ENCODE measurements at regions of chr3 and their contacts with region 1.

Region 1: GRCh38 chr3:184523825-184524615 is 37.6 kb upstream of the EPHB3 start:
- DNase-seq: peak; percentile 67
- ATAC-seq: peak; percentile 77
- H3K4me3 ChIP-seq: no peak overlapping the region
- H3K27ac ChIP-seq: no peak overlapping the region
- H3K4me1 ChIP-seq: peaks cover 3% of the 10 kb centered on the region; the same call in 1 of the 2 replicates
- H3K27me3 ChIP-seq: peaks cover 43% of the 10 kb centered on the region
- CTCF ChIP-seq: no peak
- POLR2A ChIP-seq: no peak
- RAD21 ChIP-seq: no peak

Region 2: GRCh38 chr3:184096811-184097383 is 427.1 kb before region 1 on chr3 and contains the start of gene HTR3E:
- CTCF ChIA-PET with region 1: no interaction called
- POLR2A ChIA-PET with region 1: no interaction called
- dilution Hi-C with region 1: no loop called
- in situ Hi-C with region 1: no loop called
- intact Hi-C with region 1: no loop called
- DNase-seq: no peak
- ATAC-seq: no peak
- H3K4me3 ChIP-seq: no peak within 1 kb of the TSS
- H3K27ac ChIP-seq: no peak within 1 kb of the TSS
- H3K4me1 ChIP-seq: peaks cover 1% of the 10 kb centered on the region; the same call in 1 of the 2 replicates
- H3K27me3 ChIP-seq: peaks cover 5% of the 10 kb centered on the region; the same call in 1 of the 2 replicates
- CTCF ChIP-seq: no peak
- POLR2A ChIP-seq: no peak
- RAD21 ChIP-seq: no peak
- total RNA-seq, gene HTR3E: not detected in 2 replicates

Region 3: GRCh38 chr3:184399410-184399809 is 124.6 kb before region 1 on chr3:
- CTCF ChIA-PET with region 1: no interaction called
- POLR2A ChIA-PET with region 1: no interaction called
- dilution Hi-C with region 1: no loop called
- in situ Hi-C with region 1: no loop called
- intact Hi-C with region 1: loop called (anchors 5 kb)
- DNase-seq: peak; percentile 96
- ATAC-seq: peak; percentile 99
- H3K4me3 ChIP-seq: no peak overlapping the region
- H3K27ac ChIP-seq: no peak overlapping the region
- H3K4me1 ChIP-seq: no peaks in the 10 kb centered on the region
- H3K27me3 ChIP-seq: peaks cover 43% of the 10 kb centered on the region
- CTCF ChIP-seq: no peak
- POLR2A ChIP-seq: no peak
- RAD21 ChIP-seq: no peak

Region 4: GRCh38 chr3:184479426-184480126 is 44.4 kb before region 1 on chr3:
- CTCF ChIA-PET with region 1: no interaction called
- POLR2A ChIA-PET with region 1: no interaction called
- dilution Hi-C with region 1: no loop called
- in situ Hi-C with region 1: no loop called
- intact Hi-C with region 1: loop called (anchors 5 kb)
- DNase-seq: no peak
- ATAC-seq: no peak
- H3K4me3 ChIP-seq: no peak overlapping the region
- H3K27ac ChIP-seq: no peak overlapping the region
- H3K4me1 ChIP-seq: no peaks in the 10 kb centered on the region
- H3K27me3 ChIP-seq: peaks cover 27% of the 10 kb centered on the region
- CTCF ChIP-seq: no peak
- POLR2A ChIP-seq: no peak
- RAD21 ChIP-seq: no peak

Region 5: DNA sequence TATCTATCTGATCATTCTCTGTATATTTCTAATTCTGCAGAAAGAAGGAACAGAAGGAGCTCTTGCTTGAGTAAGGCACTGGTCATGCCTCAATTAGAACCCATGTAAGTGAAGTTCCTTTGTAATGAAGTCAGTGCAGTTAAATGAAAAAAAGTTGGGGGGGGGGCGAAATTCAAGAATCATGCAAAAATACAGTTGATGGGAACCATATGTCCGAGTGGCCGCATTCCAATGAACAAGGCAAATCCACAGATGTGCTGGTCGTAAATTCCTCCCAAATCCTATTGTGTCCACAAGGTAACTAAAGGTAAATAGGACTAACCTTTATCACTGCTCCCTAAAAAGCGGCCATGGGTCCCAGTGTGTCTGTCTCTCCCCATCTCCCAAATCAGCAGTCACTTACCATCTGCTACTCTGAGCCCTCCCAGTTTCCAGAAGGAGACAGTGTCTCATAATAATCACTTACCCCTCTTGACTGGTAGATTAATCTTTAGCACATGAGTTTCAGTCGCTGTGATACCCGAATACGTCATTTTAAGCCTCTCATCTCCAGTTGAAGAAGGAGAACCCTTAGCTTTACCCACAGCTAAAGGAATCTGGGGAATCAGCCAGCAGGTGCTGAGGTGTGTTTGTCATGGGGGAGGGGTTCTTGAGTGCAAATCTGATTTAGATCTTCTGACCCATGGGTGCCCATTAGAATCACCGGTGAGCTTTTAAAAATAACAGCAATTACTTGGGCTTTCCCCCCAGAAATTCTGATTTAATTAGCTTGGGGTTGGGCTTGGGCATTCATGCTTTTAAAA is 18.7 kb before region 1 on chr3:
- CTCF ChIA-PET with region 1: interaction called, 3 read pairs
- POLR2A ChIA-PET with region 1: interaction called, 14 read pairs
- dilution Hi-C with region 1: no loop called
- in situ Hi-C with region 1: no loop called
- intact Hi-C with region 1: no loop called
- DNase-seq: no peak
- ATAC-seq: no peak
- H3K4me3 ChIP-seq: no peak overlapping the region
- H3K27ac ChIP-seq: no peak overlapping the region
- H3K4me1 ChIP-seq: no peaks in the 10 kb centered on the region
- H3K27me3 ChIP-seq: peaks cover 44% of the 10 kb centered on the region
- CTCF ChIP-seq: no peak
- POLR2A ChIP-seq: no peak
- RAD21 ChIP-seq: no peak

Region 6: GRCh38 chr3:184513276-184514170 is 10.5 kb before region 1 on chr3:
- CTCF ChIA-PET with region 1: interaction called, 11 read pairs
- POLR2A ChIA-PET with region 1: no interaction called
- dilution Hi-C with region 1: no loop called
- in situ Hi-C with region 1: no loop called
- intact Hi-C with region 1: no loop called
- DNase-seq: peak; percentile 67
- ATAC-seq: peak; percentile 100
- H3K4me3 ChIP-seq: no peak overlapping the region; the same call in 1 of the 2 replicates
- H3K27ac ChIP-seq: no peak overlapping the region
- H3K4me1 ChIP-seq: no peaks in the 10 kb centered on the region
- H3K27me3 ChIP-seq: peaks cover 60% of the 10 kb centered on the region
- CTCF ChIP-seq: peak; percentile 76
- POLR2A ChIP-seq: no peak
- RAD21 ChIP-seq: peak; percentile 75

Measured in IMR-90 (cell line).